ENCODE measurements at regions of chr15 and their contacts with region 1.

Region 1: GRCh38 chr15:68252925-68253534 is 23.5 kb upstream of the CLN6 start:
- DNase-seq: peak; percentile 66
- H3K4me3 ChIP-seq: no peak overlapping the region
- H3K27ac ChIP-seq: no peak overlapping the region
- H3K27me3 ChIP-seq: peaks cover 2% of the 10 kb centered on the region
- CTCF ChIP-seq: peak; percentile 89

Region 2: GRCh38 chr15:68031404-68031803 is 221.6 kb before region 1 on chr15:
- CTCF ChIA-PET with region 1: no interaction called
- POLR2A ChIA-PET with region 1: no interaction called
- DNase-seq: no peak
- H3K4me3 ChIP-seq: no peak overlapping the region
- H3K27ac ChIP-seq: no peak overlapping the region
- H3K27me3 ChIP-seq: peaks cover 30% of the 10 kb centered on the region
- CTCF ChIP-seq: no peak

Region 3: GRCh38 chr15:68053701-68054627 is 199.1 kb before region 1 on chr15 and contains the start of gene PIAS1:
- CTCF ChIA-PET with region 1: no interaction called
- POLR2A ChIA-PET with region 1: no interaction called
- DNase-seq: peak; percentile 63
- H3K4me3 ChIP-seq: peak within 1 kb of the TSS; percentile 86
- H3K27ac ChIP-seq: peak within 1 kb of the TSS; percentile 65
- H3K27me3 ChIP-seq: no peaks in the 10 kb centered on the region
- CTCF ChIP-seq: no peak
- polyA plus RNA-seq, gene PIAS1: 33.7 and 38.9 TPM in 2 replicates

Region 4: DNA sequence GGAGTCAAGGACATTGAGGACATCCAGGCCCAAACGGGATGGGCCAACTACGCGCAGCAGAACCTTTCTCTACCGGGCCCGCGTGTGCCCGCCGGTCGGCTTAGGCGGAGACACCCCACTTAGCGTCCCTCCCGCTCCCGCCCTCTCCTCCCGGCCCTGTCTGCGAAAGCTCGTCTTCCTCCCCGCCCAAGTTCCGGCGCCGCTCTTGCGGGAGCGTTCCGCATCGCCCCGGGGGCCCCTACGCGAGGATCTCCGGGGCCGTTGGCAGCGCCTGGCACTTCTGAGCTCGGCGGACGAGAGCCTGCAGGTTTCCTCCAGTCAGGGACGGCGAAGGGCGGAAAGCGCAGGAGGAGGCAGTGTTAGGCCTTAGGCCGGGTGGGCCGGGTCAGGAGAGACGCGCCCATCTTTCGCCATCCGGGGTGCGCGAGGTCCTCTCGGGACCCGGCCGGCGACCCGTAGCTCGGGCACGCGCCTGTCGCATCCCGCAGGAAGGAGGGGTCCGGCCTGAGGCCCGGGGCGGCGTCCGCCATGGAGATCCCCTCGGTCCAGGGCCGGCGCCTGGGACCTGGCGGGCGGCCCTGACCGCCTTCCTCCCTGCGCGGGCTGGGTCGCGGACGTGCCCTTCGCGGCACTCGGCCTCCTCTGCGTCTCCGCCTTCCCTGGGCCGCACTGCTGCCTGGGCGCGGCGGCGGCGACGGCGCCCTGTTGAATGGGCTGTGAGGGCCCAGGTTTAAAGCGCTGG is 24.7 kb after region 1 on chr15 and contains the start of gene FEM1B:
- CTCF ChIA-PET with region 1: interaction called, 35 read pairs
- POLR2A ChIA-PET with region 1: interaction called, 13 read pairs
- DNase-seq: peak; percentile 80
- H3K4me3 ChIP-seq: peak within 1 kb of the TSS; percentile 96
- H3K27ac ChIP-seq: peak within 1 kb of the TSS; percentile 94
- H3K27me3 ChIP-seq: no peaks in the 10 kb centered on the region
- CTCF ChIP-seq: no peak
- polyA plus RNA-seq, gene FEM1B: 46.5 and 55.1 TPM in 2 replicates

Region 5: DNA sequence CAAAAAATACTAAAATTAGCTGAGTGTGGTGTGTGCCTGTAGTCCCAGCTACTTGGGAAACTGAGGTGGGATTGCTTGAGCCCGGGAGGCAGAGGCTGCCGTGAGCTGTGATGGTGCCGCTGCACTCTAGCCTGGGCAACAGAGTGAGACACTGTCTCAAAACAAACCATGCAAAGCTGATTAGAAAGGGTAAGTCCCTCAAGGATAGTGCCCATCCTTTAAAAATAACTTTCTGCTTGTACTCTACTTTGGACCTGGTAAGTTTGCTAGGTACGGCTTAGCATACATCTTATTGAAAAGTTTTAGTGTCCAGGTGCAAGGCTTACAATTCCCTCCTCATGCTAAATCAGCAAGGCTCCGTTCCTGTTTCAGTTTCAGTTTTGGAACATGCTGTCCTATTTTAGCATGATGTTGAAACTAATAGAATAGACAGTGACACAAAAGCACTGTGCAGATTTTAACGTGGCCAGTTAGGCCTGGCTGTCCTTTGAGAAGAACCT is 45.9 kb after region 1 on chr15:
- CTCF ChIA-PET with region 1: interaction called, 48 read pairs
- POLR2A ChIA-PET with region 1: no interaction called
- DNase-seq: no peak
- H3K4me3 ChIP-seq: no peak overlapping the region
- H3K27ac ChIP-seq: no peak overlapping the region
- H3K27me3 ChIP-seq: no peaks in the 10 kb centered on the region
- CTCF ChIP-seq: no peak

Region 6: DNA sequence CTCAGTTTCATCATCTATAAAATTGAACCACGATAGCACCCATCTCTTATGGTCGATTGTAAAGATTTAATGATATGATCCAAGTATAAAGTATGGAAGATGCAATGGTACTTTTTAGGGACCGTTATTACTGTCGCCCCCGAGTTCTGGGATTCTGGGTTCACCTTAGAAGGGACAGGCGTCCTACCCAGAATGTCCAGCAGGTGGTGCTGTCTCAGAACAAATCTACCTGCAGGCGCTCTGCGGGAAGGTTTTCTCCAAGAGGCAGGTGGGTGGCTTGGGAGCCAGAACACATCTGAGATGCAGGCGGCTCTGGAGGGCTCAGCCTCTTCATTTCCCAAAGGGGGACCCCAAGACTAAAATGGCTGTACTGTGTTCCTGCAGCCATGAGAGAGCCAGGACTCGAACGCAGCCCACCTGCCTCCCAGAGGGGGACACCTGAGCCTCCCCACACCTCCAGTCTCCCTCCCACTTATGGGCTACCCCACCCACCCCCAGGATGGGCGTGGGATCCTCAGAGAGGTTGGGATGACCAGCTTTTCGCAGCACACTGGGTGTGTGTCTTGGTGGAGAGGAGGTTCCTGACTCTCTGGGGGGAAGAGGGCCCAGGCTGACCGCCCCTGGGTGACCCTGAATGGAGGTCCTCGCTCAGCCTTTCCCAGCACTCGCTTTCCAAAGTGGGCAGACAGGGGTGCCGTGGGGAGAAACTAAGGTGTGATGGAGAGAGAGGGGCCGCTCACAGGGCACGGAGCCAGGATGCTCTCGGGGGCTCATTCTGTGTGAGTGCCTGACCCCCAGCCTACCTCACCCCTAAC is 297.7 kb after region 1 on chr15:
- CTCF ChIA-PET with region 1: interaction called, 28 read pairs
- POLR2A ChIA-PET with region 1: no interaction called
- DNase-seq: no peak
- H3K4me3 ChIP-seq: no peak overlapping the region
- H3K27ac ChIP-seq: no peak overlapping the region
- H3K27me3 ChIP-seq: peaks cover 8% of the 10 kb centered on the region
- CTCF ChIP-seq: peak; percentile 90

Region 7: DNA sequence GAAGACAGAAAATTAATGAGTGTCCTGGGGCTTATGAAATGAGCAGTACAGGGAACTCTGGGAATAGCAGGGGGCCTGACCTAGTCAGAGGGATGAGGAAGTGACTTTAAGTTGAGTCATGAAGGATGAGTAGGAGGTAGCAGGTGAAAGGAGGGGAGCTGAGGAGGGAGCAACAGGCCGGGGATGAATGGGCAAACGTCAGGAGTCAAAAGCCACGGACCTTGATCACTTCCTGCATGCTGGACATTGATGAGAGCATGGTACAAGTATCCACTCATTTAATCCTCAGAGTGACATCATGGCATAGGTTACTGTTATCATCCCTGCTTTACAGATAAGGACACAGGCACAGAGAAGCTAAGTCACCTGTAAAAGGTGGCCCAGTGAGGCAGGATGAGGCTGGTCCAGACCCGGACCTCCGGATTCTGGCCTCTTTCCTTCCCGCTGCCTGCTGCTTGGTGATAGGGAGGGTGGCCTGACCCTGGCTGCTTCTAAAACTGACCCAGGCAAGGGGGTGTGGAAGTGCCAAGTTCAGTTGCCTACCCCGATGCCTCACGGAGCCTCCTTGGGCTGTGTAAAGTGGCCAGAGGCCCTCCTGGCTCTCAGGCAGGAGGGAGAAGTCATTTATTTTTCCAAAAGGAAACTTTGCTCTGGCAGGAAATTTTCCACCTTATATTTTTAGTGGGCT is 333.4 kb after region 1 on chr15:
- CTCF ChIA-PET with region 1: no interaction called
- POLR2A ChIA-PET with region 1: no interaction called
- DNase-seq: no peak
- H3K4me3 ChIP-seq: no peak overlapping the region
- H3K27ac ChIP-seq: peak overlapping the region; percentile 71
- H3K27me3 ChIP-seq: no peaks in the 10 kb centered on the region
- CTCF ChIP-seq: no peak

Region 8: GRCh38 chr15:68817304-68818065 is 564.5 kb after region 1 on chr15:
- CTCF ChIA-PET with region 1: no interaction called
- POLR2A ChIA-PET with region 1: no interaction called
- DNase-seq: no peak
- H3K4me3 ChIP-seq: peak overlapping the region; percentile 94
- H3K27ac ChIP-seq: peak overlapping the region; percentile 78
- H3K27me3 ChIP-seq: no peaks in the 10 kb centered on the region
- CTCF ChIP-seq: no peak

Region 9: GRCh38 chr15:68924866-68925560 is 672.0 kb after region 1 on chr15:
- CTCF ChIA-PET with region 1: interaction called, 20 read pairs
- POLR2A ChIA-PET with region 1: no interaction called
- DNase-seq: peak; percentile 29
- H3K4me3 ChIP-seq: no peak overlapping the region
- H3K27ac ChIP-seq: no peak overlapping the region
- H3K27me3 ChIP-seq: peaks cover 9% of the 10 kb centered on the region
- CTCF ChIP-seq: peak; percentile 94

Measured in AG04450 (cell line).